Calu3 (cell line): ENCODE measurements at regions of chr4 and their contacts with region 1.

Region 1: GRCh38 chr4:140012688-140013486 is 141.1 kb downstream of the MAML3 start:
- DNase-seq: peak; percentile 71
- H3K4me3 Mint-ChIP-seq: no peak overlapping the region
- H3K27ac Mint-ChIP-seq: peak overlapping the region; percentile 15
- H3K4me1 Mint-ChIP-seq: peaks cover 16% of the 10 kb centered on the region
- H3K27me3 Mint-ChIP-seq: no peaks in the 10 kb centered on the region
- CTCF ChIP-seq: peak; percentile 48

Region 2: GRCh38 chr4:140049024-140049848 is 36.3 kb after region 1 on chr4:
- CTCF ChIA-PET with region 1: interaction called, 9 read pairs
- intact Hi-C with region 1: loop called (anchors 2 kb)
- DNase-seq: peak; percentile 26
- H3K4me3 Mint-ChIP-seq: peak overlapping the region; percentile 65
- H3K27ac Mint-ChIP-seq: peak overlapping the region; percentile 78
- H3K4me1 Mint-ChIP-seq: peaks cover 35% of the 10 kb centered on the region
- H3K27me3 Mint-ChIP-seq: no peaks in the 10 kb centered on the region
- CTCF ChIP-seq: no peak

Region 3: GRCh38 chr4:140252742-140253555 is 240.1 kb after region 1 on chr4:
- CTCF ChIA-PET with region 1: interaction called, 7 read pairs
- intact Hi-C with region 1: loop called (anchors 1 kb)
- DNase-seq: peak; percentile 76
- H3K4me3 Mint-ChIP-seq: peak overlapping the region; percentile 45
- H3K27ac Mint-ChIP-seq: peak overlapping the region; percentile 11
- H3K4me1 Mint-ChIP-seq: peaks cover 29% of the 10 kb centered on the region
- H3K27me3 Mint-ChIP-seq: no peaks in the 10 kb centered on the region
- CTCF ChIP-seq: peak; percentile 87

Region 4: DNA sequence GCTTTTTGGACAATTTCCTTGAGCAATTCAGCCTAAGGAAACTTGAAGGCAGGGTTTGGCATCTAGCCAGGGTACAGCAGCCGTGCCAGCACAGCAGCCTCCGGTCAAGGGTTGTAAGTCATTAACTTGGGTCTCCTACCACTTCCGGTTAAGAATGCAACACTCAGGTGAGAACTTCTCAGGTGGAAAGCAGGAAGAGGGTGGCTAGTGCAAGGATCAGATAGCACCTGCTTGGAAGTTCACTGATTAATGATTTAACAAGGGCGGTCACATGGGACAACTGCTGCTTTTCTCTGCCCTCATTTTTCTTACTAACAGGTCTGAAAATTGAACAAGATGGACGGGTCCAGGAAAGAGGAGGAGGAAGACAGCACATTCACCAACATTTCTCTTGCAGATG is 330.4 kb after region 1 on chr4:
- CTCF ChIA-PET with region 1: no interaction called
- intact Hi-C with region 1: loop called (anchors 5 kb)
- DNase-seq: peak; percentile 86
- H3K4me3 Mint-ChIP-seq: peak overlapping the region; percentile 81
- H3K27ac Mint-ChIP-seq: peak overlapping the region; percentile 87
- H3K4me1 Mint-ChIP-seq: peaks cover 23% of the 10 kb centered on the region
- H3K27me3 Mint-ChIP-seq: no peaks in the 10 kb centered on the region
- CTCF ChIP-seq: no peak